Activated naive CD4-positive, alpha-beta T cell treated with anti-CD3 and anti-CD28 coated beads for 36 hours (primary cell): ENCODE measurements at regions of chr5 and their contacts with region 1.

Region 1: GRCh38 chr5:179697993-179698934 is 503 bp upstream of the CANX start:
- DNase-seq: peak; percentile 99
- H3K4me3 Mint-ChIP-seq: peak overlapping the region; percentile 95
- H3K27ac Mint-ChIP-seq: peak overlapping the region; percentile 97
- H3K4me1 Mint-ChIP-seq: peaks cover 37% of the 10 kb centered on the region
- H3K27me3 Mint-ChIP-seq: no peaks in the 10 kb centered on the region

Region 2: DNA sequence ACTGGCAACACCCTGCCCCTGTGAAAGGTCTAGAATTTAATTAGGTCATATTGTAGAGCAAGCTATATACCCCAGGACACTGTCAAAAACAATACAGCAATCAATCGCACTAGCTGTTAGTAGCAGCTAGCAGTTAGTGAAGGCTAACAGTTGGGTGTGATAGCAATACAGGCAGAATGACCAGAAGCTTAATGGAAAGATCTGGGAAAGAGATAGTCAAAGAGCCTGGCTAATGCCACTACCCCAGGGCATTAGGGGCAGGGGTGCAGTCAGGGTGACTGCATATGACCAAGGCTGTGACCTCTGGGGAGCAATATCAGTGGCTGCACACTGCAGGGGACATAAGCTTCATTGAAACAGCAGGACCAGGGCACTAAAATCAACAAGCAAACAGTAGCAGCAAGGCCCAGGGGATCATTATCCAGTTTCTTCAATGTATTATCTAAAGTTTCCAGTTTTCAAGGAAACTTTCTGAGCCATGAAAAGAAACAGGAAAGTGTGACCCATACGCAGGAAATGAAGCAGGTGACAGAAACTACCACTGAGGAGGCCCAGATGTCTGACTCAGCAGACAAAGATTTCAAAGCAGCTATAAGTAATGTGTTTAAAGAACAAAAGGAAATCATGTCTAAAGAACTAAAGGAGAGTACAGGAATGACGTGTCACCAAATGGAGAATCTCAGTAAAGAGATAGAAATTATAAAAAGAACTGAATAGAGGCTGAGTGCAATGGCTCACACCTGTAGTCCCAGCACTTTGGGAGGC is 555.6 kb before region 1 on chr5:
- CTCF ChIA-PET with region 1: no interaction called
- intact Hi-C with region 1: no loop called
- DNase-seq: peak; percentile 75
- H3K4me3 Mint-ChIP-seq: no peak overlapping the region
- H3K27ac Mint-ChIP-seq: peak overlapping the region; percentile 79
- H3K4me1 Mint-ChIP-seq: peaks cover 48% of the 10 kb centered on the region
- H3K27me3 Mint-ChIP-seq: no peaks in the 10 kb centered on the region

Region 3: GRCh38 chr5:179550511-179551230 is 147.6 kb before region 1 on chr5 and contains the start of gene RUFY1:
- CTCF ChIA-PET with region 1: no interaction called
- intact Hi-C with region 1: loop called (anchors 2 kb)
- DNase-seq: peak; percentile 77
- H3K4me3 Mint-ChIP-seq: peak within 1 kb of the TSS; percentile 97
- H3K27ac Mint-ChIP-seq: peak within 1 kb of the TSS; percentile 98
- H3K4me1 Mint-ChIP-seq: peaks cover 33% of the 10 kb centered on the region
- H3K27me3 Mint-ChIP-seq: no peaks in the 10 kb centered on the region
- total RNA-seq, gene RUFY1: 27.8 to 31.0 TPM

Region 4: GRCh38 chr5:179678223-179679013 is 19.8 kb before region 1 on chr5:
- CTCF ChIA-PET with region 1: interaction called, 9 read pairs
- intact Hi-C with region 1: loop called (anchors 1 kb)
- DNase-seq: peak; percentile 94
- H3K4me3 Mint-ChIP-seq: peak overlapping the region; percentile 99
- H3K27ac Mint-ChIP-seq: peak overlapping the region; percentile 95
- H3K4me1 Mint-ChIP-seq: peaks cover 36% of the 10 kb centered on the region
- H3K27me3 Mint-ChIP-seq: no peaks in the 10 kb centered on the region

Region 5: DNA sequence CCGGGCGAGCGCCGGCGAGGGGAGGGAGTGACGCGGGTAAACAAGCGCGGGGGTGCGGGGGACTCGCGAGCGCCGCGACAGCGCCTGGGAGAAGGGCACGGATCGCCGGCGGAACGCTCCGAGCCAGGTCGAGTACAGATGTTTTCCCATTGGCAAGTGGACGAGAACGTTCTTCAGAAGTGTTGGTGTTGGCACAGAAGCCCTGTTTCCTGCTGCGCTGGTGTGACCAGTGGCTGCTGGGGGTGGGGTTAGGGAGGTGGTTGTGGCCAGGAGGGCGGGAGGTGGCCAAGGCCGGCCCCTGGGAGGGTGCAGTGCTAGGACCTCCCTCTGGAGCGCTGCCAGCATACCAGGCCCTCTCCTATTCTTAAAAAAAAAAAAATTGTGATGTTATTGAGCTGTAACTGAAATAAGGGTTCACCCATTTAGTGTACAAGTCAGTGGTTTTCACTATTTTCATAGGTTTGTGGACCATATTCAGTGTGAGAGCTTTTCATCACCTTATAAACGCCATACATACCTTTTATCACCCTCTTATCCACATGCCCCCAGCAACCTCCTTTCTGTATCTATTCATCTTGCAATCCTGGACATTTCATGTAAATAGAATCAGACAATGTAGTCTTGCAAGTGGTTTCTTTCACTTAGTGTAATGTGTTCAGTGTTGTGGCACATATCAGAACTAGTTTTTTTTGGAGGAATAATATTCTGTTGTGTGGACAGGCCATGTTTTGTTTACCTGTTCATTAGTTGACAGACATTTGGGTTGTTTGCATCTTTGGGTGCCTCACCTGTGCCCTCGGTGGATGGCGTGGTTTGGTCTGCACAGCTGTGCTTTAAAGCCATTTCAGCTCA is 123.5 kb after region 1 on chr5:
- CTCF ChIA-PET with region 1: no interaction called
- intact Hi-C with region 1: loop called (anchors 1 kb)
- DNase-seq: peak; percentile 92
- H3K4me3 Mint-ChIP-seq: peak overlapping the region; percentile 88
- H3K27ac Mint-ChIP-seq: peak overlapping the region; percentile 92
- H3K4me1 Mint-ChIP-seq: peaks cover 49% of the 10 kb centered on the region
- H3K27me3 Mint-ChIP-seq: peaks cover 4% of the 10 kb centered on the region

Region 6: DNA sequence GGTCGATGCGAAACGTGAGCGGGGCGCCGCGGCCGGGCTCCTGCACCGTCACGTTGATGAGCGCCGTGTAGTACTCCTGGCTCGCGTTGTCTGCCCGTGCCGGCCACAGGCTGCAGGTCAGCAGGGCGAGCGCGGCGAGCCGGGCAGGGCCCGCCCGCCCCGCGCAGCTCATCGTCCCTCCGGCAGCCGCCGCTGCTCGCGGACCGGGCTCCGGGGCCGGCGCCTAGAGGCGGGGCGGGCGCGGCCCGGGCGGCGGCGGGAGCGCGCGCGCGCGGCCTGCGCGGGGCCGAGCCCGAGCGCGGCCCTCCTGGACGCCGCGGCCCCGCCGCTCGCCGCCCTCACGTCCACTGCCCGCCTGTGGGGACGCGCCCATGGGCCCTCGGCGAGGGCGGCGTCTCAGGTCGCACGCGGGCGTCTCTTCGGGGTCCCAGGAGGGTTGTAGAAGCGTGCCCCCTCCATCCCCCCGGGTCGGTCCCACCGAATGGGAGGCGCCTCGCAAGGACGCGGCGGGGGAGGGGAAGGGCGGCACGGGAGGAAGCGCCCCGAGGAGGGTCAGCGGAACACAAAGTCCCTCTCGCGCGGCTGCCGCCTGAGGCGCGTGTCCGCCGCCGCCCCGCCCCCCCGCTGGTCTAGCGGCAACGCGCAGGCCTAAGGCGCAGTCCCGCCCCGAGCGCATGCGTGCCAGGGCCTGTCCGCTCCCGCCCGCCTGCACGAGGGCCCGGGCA is 373.4 kb after region 1 on chr5 and contains the start of gene RNF130:
- CTCF ChIA-PET with region 1: no interaction called
- intact Hi-C with region 1: loop called (anchors 5 kb)
- DNase-seq: peak; percentile 86
- H3K4me3 Mint-ChIP-seq: peak within 1 kb of the TSS; percentile 75
- H3K27ac Mint-ChIP-seq: peak within 1 kb of the TSS; percentile 32
- H3K4me1 Mint-ChIP-seq: peaks cover 23% of the 10 kb centered on the region
- H3K27me3 Mint-ChIP-seq: peaks cover 3% of the 10 kb centered on the region
- total RNA-seq, gene RNF130: 10.3 to 11.9 TPM